IMR-90 (cell line): ENCODE measurements at regions of chr2 and their contacts with region 1.

Region 1: GRCh38 chr2:20411361-20411894 is 35.4 kb upstream of the RHOB start:
- DNase-seq: peak; percentile 77
- ATAC-seq: peak; percentile 100
- H3K4me3 ChIP-seq: no peak overlapping the region
- H3K27ac ChIP-seq: no peak overlapping the region
- H3K4me1 ChIP-seq: no peaks in the 10 kb centered on the region
- H3K27me3 ChIP-seq: no peaks in the 10 kb centered on the region; the same call in 1 of the 2 replicates
- CTCF ChIP-seq: peak; percentile 84
- POLR2A ChIP-seq: no peak
- RAD21 ChIP-seq: peak; percentile 85

Region 2: DNA sequence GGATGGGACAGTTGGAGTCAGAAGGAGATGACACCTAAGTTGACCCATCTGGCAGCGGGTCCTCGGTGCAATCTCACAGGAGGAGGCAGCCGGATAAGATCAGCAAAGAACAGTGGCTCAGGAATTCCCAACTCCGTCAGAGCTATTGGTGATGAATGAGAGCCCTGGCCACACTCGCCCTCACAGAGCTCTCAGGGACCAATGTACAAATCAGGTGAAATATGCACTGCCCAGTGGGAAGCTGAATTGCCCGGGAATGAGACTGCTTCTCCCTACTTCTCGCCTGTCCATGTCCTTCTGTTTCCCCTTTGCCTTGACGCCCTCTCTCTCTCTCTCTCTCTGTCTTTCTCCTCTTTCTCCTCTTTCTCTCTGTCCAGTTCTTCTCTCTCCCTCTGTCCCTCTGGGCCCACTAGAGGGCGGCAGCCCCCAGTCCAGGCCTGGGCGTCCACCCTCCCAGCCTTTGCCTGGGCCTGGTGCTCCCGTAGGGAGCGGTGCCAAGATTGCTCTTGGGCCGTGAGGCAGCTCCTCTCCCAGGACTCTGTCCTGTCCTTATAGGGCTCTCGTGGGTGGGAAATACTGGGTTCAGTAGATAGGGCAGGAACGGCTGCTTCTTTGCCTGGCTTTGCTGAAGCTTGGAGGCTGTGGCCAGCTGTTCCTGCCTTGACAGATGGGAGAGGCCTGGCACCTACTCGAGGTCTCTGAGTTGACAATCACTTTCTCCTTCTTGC is 32.5 kb before region 1 on chr2:
- CTCF ChIA-PET with region 1: interaction called, 10 read pairs
- POLR2A ChIA-PET with region 1: no interaction called
- dilution Hi-C with region 1: no loop called
- in situ Hi-C with region 1: no loop called
- intact Hi-C with region 1: no loop called
- DNase-seq: peak; percentile 86
- ATAC-seq: peak; percentile 97
- H3K4me3 ChIP-seq: no peak overlapping the region
- H3K27ac ChIP-seq: peak overlapping the region; percentile 46; the same call in 1 of the 2 replicates
- H3K4me1 ChIP-seq: peaks cover 19% of the 10 kb centered on the region
- H3K27me3 ChIP-seq: no peaks in the 10 kb centered on the region
- CTCF ChIP-seq: peak; percentile 92
- POLR2A ChIP-seq: 0 out of 2 replicates have a peak, but pooled peaks have one; percentile 36
- RAD21 ChIP-seq: peak; percentile 88

Region 3: GRCh38 chr2:20424300-20425290 is 13.2 kb after region 1 on chr2:
- CTCF ChIA-PET with region 1: interaction called, 45 read pairs
- POLR2A ChIA-PET with region 1: interaction called, 3 read pairs
- dilution Hi-C with region 1: no loop called
- in situ Hi-C with region 1: no loop called
- intact Hi-C with region 1: no loop called
- DNase-seq: peak; percentile 93
- ATAC-seq: peak; percentile 81
- H3K4me3 ChIP-seq: no peak overlapping the region
- H3K27ac ChIP-seq: peak overlapping the region; percentile 68
- H3K4me1 ChIP-seq: peaks cover 35% of the 10 kb centered on the region
- H3K27me3 ChIP-seq: no peaks in the 10 kb centered on the region
- CTCF ChIP-seq: no peak
- POLR2A ChIP-seq: peak; percentile 27; the same call in 1 of the 2 replicates
- RAD21 ChIP-seq: no peak

Region 4: GRCh38 chr2:20538308-20539132 is 127.1 kb after region 1 on chr2:
- CTCF ChIA-PET with region 1: no interaction called
- POLR2A ChIA-PET with region 1: no interaction called
- dilution Hi-C with region 1: no loop called
- in situ Hi-C with region 1: no loop called
- intact Hi-C with region 1: no loop called
- DNase-seq: no peak
- ATAC-seq: no peak
- H3K4me3 ChIP-seq: no peak overlapping the region
- H3K27ac ChIP-seq: no peak overlapping the region
- H3K4me1 ChIP-seq: peaks cover 2% of the 10 kb centered on the region; the same call in 1 of the 2 replicates
- H3K27me3 ChIP-seq: peaks cover 4% of the 10 kb centered on the region; the same call in 1 of the 2 replicates
- CTCF ChIP-seq: no peak
- POLR2A ChIP-seq: no peak
- RAD21 ChIP-seq: no peak

Region 5: DNA sequence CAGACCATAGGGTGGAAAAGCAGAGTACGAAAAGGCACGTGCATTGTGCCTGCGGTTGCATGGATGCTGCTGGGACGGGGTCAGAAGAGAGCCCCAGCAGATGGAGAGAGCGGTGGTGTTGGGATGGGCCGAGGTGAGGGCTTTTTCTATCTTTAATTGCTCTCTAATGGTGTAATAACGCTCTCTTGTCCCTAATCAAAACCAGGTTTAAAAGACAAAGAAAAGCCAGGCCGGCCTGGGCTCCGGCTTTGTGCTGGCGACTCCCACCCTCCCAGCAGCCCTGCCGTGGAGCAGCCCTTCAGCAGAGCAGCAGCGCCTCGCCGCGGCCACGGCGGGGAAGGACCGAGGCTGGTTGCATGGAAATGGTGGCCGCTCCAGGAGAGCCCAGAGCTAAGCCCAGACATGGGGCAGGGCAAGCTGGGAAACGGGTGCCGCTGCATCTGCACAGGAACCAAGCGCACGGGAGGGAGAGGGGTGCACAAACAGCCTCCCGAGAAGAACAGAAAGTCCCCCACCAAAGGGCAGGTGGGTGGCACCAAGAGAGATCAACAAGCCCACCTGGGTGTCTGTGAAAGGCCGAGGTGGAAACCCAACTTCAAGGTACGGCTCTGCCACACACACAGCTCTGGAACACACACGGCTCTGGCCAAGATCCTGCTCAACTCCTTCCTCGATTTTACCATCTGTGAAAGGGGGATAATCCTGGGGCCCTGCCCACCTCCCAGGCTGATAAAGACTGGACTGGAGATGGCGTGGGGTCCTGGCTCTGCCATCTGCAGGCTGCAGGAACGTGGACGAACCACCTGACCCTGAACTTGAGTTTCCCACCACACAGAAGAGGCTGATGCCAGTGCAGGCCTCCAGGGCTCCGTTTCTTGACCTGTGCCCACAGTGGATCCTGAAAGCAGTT is 224.5 kb after region 1 on chr2:
- CTCF ChIA-PET with region 1: interaction called, 7 read pairs
- POLR2A ChIA-PET with region 1: no interaction called
- dilution Hi-C with region 1: no loop called
- in situ Hi-C with region 1: no loop called
- intact Hi-C with region 1: loop called (anchors 1 kb)
- DNase-seq: peak; percentile 71
- ATAC-seq: peak; percentile 99
- H3K4me3 ChIP-seq: no peak overlapping the region
- H3K27ac ChIP-seq: peak overlapping the region; percentile 41; the same call in 1 of the 2 replicates
- H3K4me1 ChIP-seq: peaks cover 11% of the 10 kb centered on the region
- H3K27me3 ChIP-seq: no peaks in the 10 kb centered on the region
- CTCF ChIP-seq: peak; percentile 99
- POLR2A ChIP-seq: peak; percentile 69
- RAD21 ChIP-seq: peak; percentile 100

Region 6: GRCh38 chr2:20650880-20651730 is 239.7 kb after region 1 on chr2 and contains the start of gene HS1BP3:
- CTCF ChIA-PET with region 1: interaction called, 10 read pairs
- POLR2A ChIA-PET with region 1: no interaction called
- dilution Hi-C with region 1: no loop called
- in situ Hi-C with region 1: no loop called
- intact Hi-C with region 1: no loop called
- DNase-seq: peak; percentile 65
- ATAC-seq: peak; percentile 99
- H3K4me3 ChIP-seq: peak within 1 kb of the TSS; percentile 91
- H3K27ac ChIP-seq: peak within 1 kb of the TSS; percentile 79
- H3K4me1 ChIP-seq: peaks cover 9% of the 10 kb centered on the region
- H3K27me3 ChIP-seq: peaks cover 14% of the 10 kb centered on the region
- CTCF ChIP-seq: peak; percentile 99
- POLR2A ChIP-seq: peak; percentile 70
- RAD21 ChIP-seq: peak; percentile 49
- total RNA-seq, gene HS1BP3: 9.0 and 10.3 TPM in 2 replicates